Activated T-helper 1 cell treated with anti-CD3 and anti-CD28 coated beads, Interleukin-12 subunit alpha, Interleukin-12 subunit beta, Interleukin-2, Interleukin-4 antibody, amounts not matched to agents 30 ng/mL and 10 ng/mL and 1 ng/mL, durations not matched to agents 14 hours and 24 hours and 36 hours (primary cell): ENCODE measurements at regions of chr14 and their contacts with region 1.

Region 1: DNA sequence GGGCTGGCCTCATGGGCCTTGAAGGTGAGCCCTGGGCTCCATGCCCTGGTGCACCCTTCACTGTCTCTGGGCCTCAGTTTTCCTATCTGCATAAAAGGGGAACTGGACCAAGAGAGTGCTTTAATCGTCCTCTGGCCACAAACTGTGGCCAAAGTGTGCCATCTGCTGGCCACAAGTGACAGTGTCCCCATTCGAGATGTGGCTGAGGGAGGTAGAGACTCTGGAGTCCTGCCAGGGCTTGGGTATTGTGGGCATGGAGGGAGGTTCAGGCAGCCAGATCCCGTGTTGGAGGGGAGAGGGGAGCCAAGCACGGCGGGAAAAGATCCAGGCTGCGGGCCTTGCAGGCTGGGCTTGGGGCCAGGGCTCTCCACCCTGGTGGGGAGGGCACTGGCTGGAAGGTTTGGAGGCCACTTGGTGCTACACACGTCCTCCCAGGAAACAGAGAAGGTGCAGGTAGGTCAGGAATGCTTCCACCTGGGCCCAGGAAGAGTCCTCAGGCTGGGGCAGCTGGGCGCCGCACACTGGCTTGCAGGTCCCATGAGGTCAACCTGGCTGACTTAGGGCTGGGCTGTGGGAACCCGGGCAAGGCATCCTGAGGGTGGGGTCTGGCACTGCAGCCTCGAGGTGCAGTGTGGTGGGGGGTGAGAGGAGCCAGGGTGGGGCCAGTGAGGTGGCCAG is 7.3 kb upstream of the KIF26A start:
- DNase-seq: no peak
- H3K4me3 Mint-ChIP-seq: no peak overlapping the region
- H3K27ac Mint-ChIP-seq: no peak overlapping the region
- H3K4me1 Mint-ChIP-seq: no peaks in the 10 kb centered on the region
- H3K27me3 Mint-ChIP-seq: peaks cover 16% of the 10 kb centered on the region

Region 2: DNA sequence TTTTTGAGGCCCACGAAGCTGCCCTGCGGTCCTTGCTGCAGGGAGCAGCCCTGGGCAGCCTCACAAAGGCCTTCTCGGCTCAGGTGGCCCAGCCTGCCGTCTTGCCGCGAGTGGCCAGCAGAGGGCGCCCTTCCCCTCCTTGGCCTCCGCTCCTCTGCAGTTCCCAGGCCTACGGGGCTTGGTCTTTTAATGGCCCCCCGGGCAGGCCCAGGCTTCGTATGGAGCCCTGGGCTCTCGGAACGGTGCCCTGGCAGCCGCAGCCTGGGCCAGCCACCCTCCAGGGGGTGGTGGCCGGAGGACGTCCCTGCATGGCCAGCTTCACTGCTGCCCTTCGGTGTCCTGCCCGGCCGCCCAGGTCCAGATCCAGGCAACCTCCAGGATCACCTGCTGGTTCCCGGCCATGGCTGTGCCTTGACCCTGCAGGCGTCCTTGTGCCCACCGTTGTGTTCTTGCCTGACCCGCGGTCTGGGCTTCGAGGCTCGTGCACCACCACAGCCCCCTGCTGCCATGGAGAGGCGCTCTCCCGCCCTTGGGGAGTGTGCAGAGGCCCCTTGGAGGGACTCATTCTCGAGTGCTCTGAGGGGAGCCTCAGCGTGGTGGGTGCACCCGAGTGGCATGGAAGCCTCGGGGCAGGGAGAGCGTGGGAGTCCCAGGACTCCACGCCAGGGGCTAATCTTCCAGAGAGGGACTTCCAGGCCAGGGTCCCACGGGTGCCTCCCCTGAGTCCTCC is 36.2 kb before region 1 on chr14:
- intact Hi-C with region 1: loop called (anchors 1 kb)
- DNase-seq: peak; percentile 60
- H3K4me3 Mint-ChIP-seq: no peak overlapping the region
- H3K27ac Mint-ChIP-seq: no peak overlapping the region
- H3K4me1 Mint-ChIP-seq: peaks cover 4% of the 10 kb centered on the region
- H3K27me3 Mint-ChIP-seq: no peaks in the 10 kb centered on the region